Naive thymus-derived CD4-positive, alpha-beta T cell (primary cell): ENCODE measurements at regions of chr10 and their contacts with region 1.

Region 1: DNA sequence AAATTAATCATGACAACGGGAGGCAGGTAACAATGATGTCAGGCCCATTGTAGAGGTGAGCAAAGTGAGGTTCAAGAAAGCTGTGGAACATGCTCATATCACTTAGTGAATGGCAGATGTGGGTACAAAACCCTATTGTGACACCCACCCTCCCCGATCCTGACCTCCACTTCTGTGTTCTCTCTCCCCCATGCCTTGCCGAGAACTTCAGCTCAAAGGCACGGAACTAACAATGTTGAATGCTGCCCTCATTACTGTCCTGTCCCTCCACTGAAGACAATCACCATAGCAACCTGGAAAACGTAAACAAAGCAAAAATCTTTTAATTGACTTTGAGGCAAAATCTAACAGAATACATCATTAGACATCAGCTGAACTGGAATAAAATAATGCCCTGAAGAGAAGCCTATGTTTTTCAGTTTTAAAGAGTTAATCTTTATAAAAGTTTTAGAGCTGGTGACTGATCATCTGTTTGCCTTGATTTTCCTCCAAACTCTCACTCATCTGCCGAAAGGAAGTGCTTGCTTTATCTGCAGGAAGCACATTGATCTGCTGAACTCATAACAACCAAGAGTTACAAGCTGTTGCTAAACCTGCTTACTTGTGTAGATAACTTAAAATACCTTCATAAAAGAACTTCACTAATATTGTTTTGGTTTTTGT is 133.6 kb downstream of the CUBN start:
- DNase-seq: peak in 4 of 9 donors; percentile 29 to 43 (median 32)
- ATAC-seq: peak; percentile 82
- H3K4me3 ChIP-seq: no peak overlapping the region
- H3K4me3 Mint-ChIP-seq: peak overlapping the region in 8 of 10 donors; percentile 3 to 79 (median 49)
- H3K27ac ChIP-seq: peak overlapping the region; percentile 19
- H3K27ac Mint-ChIP-seq: peak overlapping the region; percentile 45 to 96 (median 85)
- H3K4me1 ChIP-seq: peaks cover 0 to 14% of the 10 kb centered on the region in 2 donors
- H3K4me1 Mint-ChIP-seq: peaks cover 6 to 28% (median 21%) of the 10 kb centered on the region in 7 donors
- H3K27me3 ChIP-seq: no peaks in the 10 kb centered on the region
- H3K27me3 Mint-ChIP-seq: peaks cover 0 to 65% (median 0%) of the 10 kb centered on the region in 5 donors

Region 2: DNA sequence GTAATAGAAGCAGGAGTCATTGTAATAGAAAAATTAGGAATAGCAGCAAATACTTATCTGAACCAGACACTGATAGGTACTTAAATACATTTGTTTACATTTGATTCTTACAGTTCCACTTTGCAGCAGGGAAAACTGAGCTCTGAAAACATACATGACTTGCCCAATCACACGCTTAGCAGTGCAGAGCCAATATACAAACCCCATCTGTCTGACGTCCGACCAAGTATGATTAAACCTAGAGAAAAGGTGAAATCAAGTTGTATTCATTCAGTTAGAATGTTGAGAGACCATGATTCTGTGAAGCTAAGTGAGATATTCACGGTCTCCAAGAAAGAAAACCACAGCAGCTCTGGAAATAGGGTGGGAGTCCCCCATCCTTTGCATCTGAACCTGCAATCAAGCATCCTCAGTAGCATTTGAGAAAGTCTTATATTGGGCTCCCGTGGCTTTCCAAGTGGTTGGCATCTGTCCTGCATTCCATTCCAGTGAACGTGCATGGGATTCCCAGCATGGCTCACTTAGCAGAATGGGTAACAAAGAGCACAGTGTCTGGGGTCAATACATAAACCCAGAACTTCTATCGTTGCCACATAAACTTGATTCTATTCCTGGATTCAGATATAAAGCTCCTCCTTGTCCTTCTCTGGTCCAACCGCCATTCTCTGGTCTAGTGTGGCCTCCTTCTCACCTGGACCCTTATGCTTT is 30.1 kb before region 1 on chr10:
- CTCF ChIA-PET with region 1: no interaction called
- POLR2A ChIA-PET with region 1: no interaction called
- intact Hi-C with region 1: loop called in 1 of 2 experiments (anchors 2 kb)
- DNase-seq: no peak
- ATAC-seq: no peak
- H3K4me3 ChIP-seq: no peak overlapping the region
- H3K4me3 Mint-ChIP-seq: no peak overlapping the region
- H3K27ac ChIP-seq: no peak overlapping the region
- H3K27ac Mint-ChIP-seq: no peak overlapping the region
- H3K4me1 ChIP-seq: no peaks in the 10 kb centered on the region
- H3K4me1 Mint-ChIP-seq: peaks cover 12 to 27% (median 17%) of the 10 kb centered on the region in 7 donors
- H3K27me3 ChIP-seq: no peaks in the 10 kb centered on the region
- H3K27me3 Mint-ChIP-seq: peaks cover 0 to 17% (median 0%) of the 10 kb centered on the region in 5 donors